Heart right ventricle (tissue), 16 donors: ENCODE measurements at regions of chr3 and their contacts with region 1.

Region 1: DNA sequence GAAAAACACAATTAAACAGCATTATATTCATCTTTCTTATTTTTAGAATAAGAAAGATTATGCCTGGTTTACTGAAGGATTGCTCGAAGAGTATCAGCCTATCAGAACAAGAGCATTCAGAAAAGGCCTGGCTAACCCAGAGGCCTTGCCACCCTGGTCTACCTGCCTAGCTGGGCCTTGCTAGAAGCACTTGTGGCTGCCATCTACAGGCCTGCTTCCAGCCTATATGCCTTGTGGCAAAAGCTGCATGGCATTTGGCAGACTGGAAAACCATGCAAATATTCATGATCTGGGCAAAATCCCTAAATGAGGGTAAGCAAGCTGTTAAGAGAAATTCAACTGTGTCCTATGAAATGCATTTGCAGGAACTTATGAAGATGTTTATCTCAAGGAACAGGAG is 9.3 kb upstream of the ATP13A4 start:
- DNase-seq: no peak
- ATAC-seq: peak in 2 of 8 donors; percentile 56 to 64
- H3K4me3 ChIP-seq: no peak overlapping the region
- H3K27ac ChIP-seq: no peak overlapping the region
- H3K4me1 ChIP-seq: peaks cover 0 to 7% (median 0%) of the 10 kb centered on the region in 9 donors
- H3K27me3 ChIP-seq: peaks cover 0 to 3% (median 0%) of the 10 kb centered on the region in 7 donors
- CTCF ChIP-seq: peak in 4 of 9 donors; percentile 10 to 35 (median 26)

Region 2: GRCh38 chr3:193040836-193041672 is 523.0 kb before region 1 on chr3:
- intact Hi-C with region 1: loop called in 4 of 10 experiments (anchors 10 kb)
- DNase-seq: peak in 1 of 2 donors; percentile 11
- ATAC-seq: peak in 5 of 8 donors; percentile 23 to 65 (median 48)
- H3K4me3 ChIP-seq: no peak overlapping the region
- H3K27ac ChIP-seq: no peak overlapping the region
- H3K4me1 ChIP-seq: no peaks in the 10 kb centered on the region
- H3K27me3 ChIP-seq: no peaks in the 10 kb centered on the region
- CTCF ChIP-seq: peak; percentile 16 to 76 (median 58)

Region 3: GRCh38 chr3:193190146-193190786 is 373.7 kb before region 1 on chr3:
- intact Hi-C with region 1: loop called in 1 of 10 experiments (anchors 10 kb)
- DNase-seq: no peak
- ATAC-seq: peak in 1 of 8 donors; percentile 35
- H3K4me3 ChIP-seq: no peak overlapping the region
- H3K27ac ChIP-seq: no peak overlapping the region
- H3K4me1 ChIP-seq: peaks cover 0 to 3% (median 0%) of the 10 kb centered on the region in 9 donors
- H3K27me3 ChIP-seq: no peaks in the 10 kb centered on the region
- CTCF ChIP-seq: peak in 8 of 9 donors; percentile 17 to 53 (median 40)

Region 4: GRCh38 chr3:193446965-193447602 is 116.9 kb before region 1 on chr3:
- intact Hi-C with region 1: no loop called
- DNase-seq: no peak
- ATAC-seq: no peak
- H3K4me3 ChIP-seq: no peak overlapping the region
- H3K27ac ChIP-seq: no peak overlapping the region
- H3K4me1 ChIP-seq: no peaks in the 10 kb centered on the region
- H3K27me3 ChIP-seq: peaks cover 0 to 4% (median 0%) of the 10 kb centered on the region in 7 donors
- CTCF ChIP-seq: no peak

Region 5: DNA sequence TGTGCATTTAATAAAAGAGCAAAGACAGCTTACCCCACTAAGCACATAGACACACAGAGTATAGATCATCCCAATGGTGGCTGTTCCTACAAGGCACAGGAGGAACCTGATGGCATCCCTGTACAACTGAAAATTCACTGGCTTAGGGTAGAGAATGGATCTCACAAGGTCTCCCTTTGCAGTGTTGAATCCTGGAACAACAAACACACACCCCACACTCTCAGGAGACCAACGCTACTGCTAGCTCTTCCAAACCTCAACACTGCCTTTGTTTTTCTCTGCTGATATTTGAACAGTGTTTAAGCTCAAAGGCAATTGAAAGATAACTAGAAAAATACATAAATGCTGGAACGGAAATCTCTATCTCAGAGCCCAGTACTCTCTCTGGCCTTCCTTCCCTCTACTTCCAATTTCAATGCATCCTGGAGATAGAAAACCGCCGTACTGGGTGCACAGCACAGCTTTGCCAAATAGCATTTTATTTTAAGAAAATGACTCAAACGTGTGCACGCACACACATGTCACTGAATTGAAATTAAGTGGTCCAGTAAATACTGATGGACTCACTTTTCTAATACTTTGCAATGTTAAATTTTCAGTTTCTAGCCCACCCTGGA is 97.9 kb before region 1 on chr3:
- intact Hi-C with region 1: loop called in 2 of 10 experiments (anchors 10 kb)
- DNase-seq: no peak
- ATAC-seq: no peak
- H3K4me3 ChIP-seq: no peak overlapping the region
- H3K27ac ChIP-seq: no peak overlapping the region
- H3K4me1 ChIP-seq: peaks cover 0 to 7% (median 6%) of the 10 kb centered on the region in 9 donors
- H3K27me3 ChIP-seq: no peaks in the 10 kb centered on the region
- CTCF ChIP-seq: no peak

Region 6: GRCh38 chr3:193655831-193656433 is 91.9 kb after region 1 on chr3:
- intact Hi-C with region 1: no loop called
- DNase-seq: no peak
- ATAC-seq: peak in 5 of 8 donors; percentile 51 to 64 (median 61)
- H3K4me3 ChIP-seq: no peak overlapping the region
- H3K27ac ChIP-seq: peak overlapping the region in 4 of 10 donors; percentile 12 to 49 (median 40)
- H3K4me1 ChIP-seq: peaks cover 0 to 14% (median 0%) of the 10 kb centered on the region in 9 donors
- H3K27me3 ChIP-seq: no peaks in the 10 kb centered on the region
- CTCF ChIP-seq: no peak

Region 7: DNA sequence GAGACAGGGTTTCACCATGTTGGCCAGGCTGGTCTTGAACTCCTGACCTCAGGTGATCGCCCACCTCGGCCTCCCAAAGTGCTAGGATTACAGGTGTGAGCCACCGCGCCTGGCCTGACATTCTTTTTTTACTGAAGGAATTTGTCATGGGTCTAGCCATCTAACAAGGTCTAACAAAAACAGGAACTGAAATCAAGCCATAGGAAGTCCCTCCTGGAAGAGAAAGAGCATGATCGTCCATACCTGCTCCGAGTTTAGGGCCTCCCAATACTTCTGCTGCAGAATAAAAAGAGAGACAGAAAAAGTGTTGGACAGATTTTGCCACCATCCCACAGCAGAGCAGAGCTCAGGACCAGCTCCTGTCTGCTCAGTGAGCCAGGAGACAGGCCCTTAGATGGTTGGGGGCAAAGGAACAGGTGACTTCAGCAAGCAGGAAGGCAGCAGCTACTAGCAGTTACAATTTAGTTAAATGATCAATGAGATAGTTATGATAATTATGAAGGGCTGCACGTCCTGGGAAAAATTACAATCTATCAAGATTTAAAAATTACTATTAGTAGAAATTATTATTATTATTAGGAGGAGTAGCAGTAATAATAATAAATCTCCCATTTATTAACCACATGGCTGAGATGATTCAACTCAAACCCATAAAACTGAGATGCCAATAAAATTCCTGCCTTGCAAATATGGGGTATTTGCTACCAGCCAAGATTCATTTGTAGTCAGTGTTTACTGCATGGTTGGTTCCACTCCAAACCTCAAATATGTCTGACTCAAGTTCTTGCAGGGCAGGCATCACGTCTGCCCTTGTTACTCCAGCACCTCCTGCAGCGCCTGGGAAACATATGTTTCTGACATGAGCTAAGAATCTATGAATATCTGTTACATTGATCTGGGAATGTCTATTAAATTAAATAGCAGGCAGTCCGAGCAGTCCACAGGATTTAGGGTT is 1029.1 kb after region 1 on chr3:
- intact Hi-C with region 1: no loop called
- DNase-seq: no peak
- ATAC-seq: peak in 2 of 8 donors; percentile 24 to 50
- H3K4me3 ChIP-seq: no peak overlapping the region
- H3K27ac ChIP-seq: peak overlapping the region in 3 of 10 donors; percentile 46 to 53 (median 48)
- H3K4me1 ChIP-seq: peaks cover 0 to 27% (median 12%) of the 10 kb centered on the region in 9 donors
- H3K27me3 ChIP-seq: no peaks in the 10 kb centered on the region
- CTCF ChIP-seq: peak in 1 of 9 donors; percentile 12